MCF 10A (cell line): ENCODE measurements at regions of chr1 and their contacts with region 1.

Region 1: GRCh38 chr1:154992721-154993571 is 440 bp upstream of the LENEP start:
- DNase-seq: no peak
- H3K4me3 Mint-ChIP-seq: no peak overlapping the region
- H3K27ac Mint-ChIP-seq: peak overlapping the region; percentile 50
- H3K4me1 Mint-ChIP-seq: peaks cover 32% of the 10 kb centered on the region
- H3K27me3 Mint-ChIP-seq: no peaks in the 10 kb centered on the region
- CTCF ChIP-seq: no peak

Region 2: GRCh38 chr1:154772606-154773506 is 220.1 kb before region 1 on chr1:
- CTCF ChIA-PET with region 1: no interaction called
- POLR2A ChIA-PET with region 1: no interaction called
- intact Hi-C with region 1: no loop called
- DNase-seq: no peak
- H3K4me3 Mint-ChIP-seq: no peak overlapping the region
- H3K27ac Mint-ChIP-seq: no peak overlapping the region
- H3K4me1 Mint-ChIP-seq: no peaks in the 10 kb centered on the region
- H3K27me3 Mint-ChIP-seq: no peaks in the 10 kb centered on the region
- CTCF ChIP-seq: no peak

Region 3: DNA sequence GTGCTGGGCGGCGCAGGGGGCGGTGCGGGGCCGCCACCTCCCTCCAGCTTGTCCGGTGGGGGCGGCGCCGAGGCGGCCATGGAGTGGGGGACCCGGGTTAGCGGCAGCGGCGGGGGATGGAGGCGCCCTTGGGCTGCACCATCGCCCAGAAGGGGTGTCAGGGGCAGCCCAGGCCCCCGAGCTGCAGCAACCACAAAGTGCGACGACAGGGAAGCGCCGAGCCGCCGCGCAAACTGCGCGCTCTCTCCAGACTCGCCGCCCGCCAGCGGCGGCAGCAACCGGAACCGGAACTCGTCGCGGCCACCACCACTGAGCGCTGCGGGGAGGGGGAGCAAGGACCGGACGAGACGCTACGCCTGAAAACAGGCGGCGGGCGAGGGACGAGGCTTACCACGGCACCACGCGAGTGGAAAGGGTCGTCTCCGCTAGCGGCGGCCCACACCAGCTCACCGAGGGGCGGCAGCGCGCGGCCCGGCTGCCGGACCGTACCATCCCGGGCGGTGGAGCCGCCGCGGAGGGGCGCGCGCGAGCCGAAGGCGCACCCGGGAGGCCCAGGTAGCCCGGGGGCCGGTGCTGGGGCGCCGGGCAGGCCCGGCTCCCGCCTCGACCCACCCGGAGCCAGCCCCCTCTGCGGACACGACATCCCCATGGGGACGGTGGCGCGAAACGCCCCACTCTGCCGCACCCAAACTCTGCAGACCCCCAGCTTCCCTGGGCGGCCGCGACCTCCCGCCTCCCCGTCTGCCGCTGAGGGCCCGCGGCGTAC is 31.3 kb before region 1 on chr1 and contains the start of gene PYGO2:
- CTCF ChIA-PET with region 1: interaction called, 33 read pairs
- POLR2A ChIA-PET with region 1: interaction called, 1,917 read pairs
- intact Hi-C with region 1: no loop called
- DNase-seq: peak; percentile 85
- H3K4me3 Mint-ChIP-seq: peak within 1 kb of the TSS; percentile 73
- H3K27ac Mint-ChIP-seq: peak within 1 kb of the TSS; percentile 33
- H3K4me1 Mint-ChIP-seq: peaks cover 39% of the 10 kb centered on the region
- H3K27me3 Mint-ChIP-seq: no peaks in the 10 kb centered on the region
- CTCF ChIP-seq: peak; percentile 81
- total RNA-seq, gene PYGO2: 32.1 and 35.9 TPM in 2 replicates

Region 4: GRCh38 chr1:156160743-156161171 is 1167.8 kb after region 1 on chr1:
- CTCF ChIA-PET with region 1: no interaction called
- POLR2A ChIA-PET with region 1: no interaction called
- intact Hi-C with region 1: no loop called
- DNase-seq: no peak
- H3K4me3 Mint-ChIP-seq: no peak overlapping the region
- H3K27ac Mint-ChIP-seq: no peak overlapping the region
- H3K4me1 Mint-ChIP-seq: peaks cover 4% of the 10 kb centered on the region
- H3K27me3 Mint-ChIP-seq: peaks cover 12% of the 10 kb centered on the region
- CTCF ChIP-seq: no peak